ENCODE measurements at regions of chr22 and their contacts with region 1.

Region 1: GRCh38 chr22:30005213-30005857 is 74.9 kb upstream of the HORMAD2 start:
- DNase-seq: peak; percentile 59 to 77
- ATAC-seq: peak; percentile 67 to 81 (median 78)
- H3K4me3 ChIP-seq: no peak overlapping the region
- H3K4me3 Mint-ChIP-seq: no peak overlapping the region
- H3K27ac ChIP-seq: no peak overlapping the region
- H3K27ac Mint-ChIP-seq: no peak overlapping the region
- H3K4me1 ChIP-seq: peaks cover 3% of the 10 kb centered on the region
- H3K4me1 Mint-ChIP-seq: peaks cover 4 to 10% of the 10 kb centered on the region in 2 donors
- H3K27me3 ChIP-seq: no peaks in the 10 kb centered on the region
- H3K27me3 Mint-ChIP-seq: no peaks in the 10 kb centered on the region
- CTCF ChIP-seq: peak; percentile 92

Region 2: DNA sequence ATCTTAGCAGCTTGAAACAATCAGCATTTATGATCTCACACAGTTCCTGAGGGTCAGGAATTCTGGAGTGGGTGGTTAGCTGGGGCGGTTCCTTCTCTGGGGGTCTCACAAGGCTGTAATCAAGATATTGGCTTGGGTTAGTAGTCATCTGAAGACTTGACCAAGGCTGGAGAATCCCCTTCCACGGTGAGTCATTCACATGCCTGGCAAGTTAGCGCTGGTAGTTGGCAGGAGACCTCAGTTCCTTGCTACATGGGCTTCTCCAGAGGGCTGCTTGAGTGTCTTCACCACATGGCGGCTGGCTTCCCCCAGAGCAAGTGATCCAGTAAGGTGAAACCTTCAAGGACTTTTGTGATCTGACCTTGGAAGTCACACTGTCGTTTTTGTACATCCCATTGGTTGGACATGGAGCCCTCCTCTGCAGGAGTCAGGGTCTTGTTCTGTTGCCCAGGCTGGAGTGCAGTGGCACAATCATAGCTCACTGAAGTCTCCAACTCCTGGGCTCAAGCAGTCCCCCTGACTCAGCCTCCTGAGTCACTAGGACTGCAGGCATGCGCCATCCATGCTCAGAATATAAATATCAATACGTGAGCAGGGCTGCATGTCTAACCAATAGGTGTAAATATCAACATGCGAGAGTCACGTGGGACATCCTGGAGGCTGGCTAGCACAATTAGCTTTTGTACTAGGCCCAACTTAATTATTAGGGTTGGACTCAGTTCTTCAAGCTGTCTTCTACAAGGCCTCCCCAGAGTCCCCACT is 417.2 kb before region 1 on chr22:
- intact Hi-C with region 1: loop called (anchors 2 kb)
- DNase-seq: no peak
- ATAC-seq: no peak
- H3K4me3 ChIP-seq: no peak overlapping the region
- H3K4me3 Mint-ChIP-seq: no peak overlapping the region
- H3K27ac ChIP-seq: no peak overlapping the region
- H3K27ac Mint-ChIP-seq: peak overlapping the region; percentile 36 to 70
- H3K4me1 ChIP-seq: peaks cover 6% of the 10 kb centered on the region
- H3K4me1 Mint-ChIP-seq: peaks cover 6 to 7% of the 10 kb centered on the region in 2 donors
- H3K27me3 ChIP-seq: no peaks in the 10 kb centered on the region
- H3K27me3 Mint-ChIP-seq: no peaks in the 10 kb centered on the region
- CTCF ChIP-seq: no peak

Region 3: DNA sequence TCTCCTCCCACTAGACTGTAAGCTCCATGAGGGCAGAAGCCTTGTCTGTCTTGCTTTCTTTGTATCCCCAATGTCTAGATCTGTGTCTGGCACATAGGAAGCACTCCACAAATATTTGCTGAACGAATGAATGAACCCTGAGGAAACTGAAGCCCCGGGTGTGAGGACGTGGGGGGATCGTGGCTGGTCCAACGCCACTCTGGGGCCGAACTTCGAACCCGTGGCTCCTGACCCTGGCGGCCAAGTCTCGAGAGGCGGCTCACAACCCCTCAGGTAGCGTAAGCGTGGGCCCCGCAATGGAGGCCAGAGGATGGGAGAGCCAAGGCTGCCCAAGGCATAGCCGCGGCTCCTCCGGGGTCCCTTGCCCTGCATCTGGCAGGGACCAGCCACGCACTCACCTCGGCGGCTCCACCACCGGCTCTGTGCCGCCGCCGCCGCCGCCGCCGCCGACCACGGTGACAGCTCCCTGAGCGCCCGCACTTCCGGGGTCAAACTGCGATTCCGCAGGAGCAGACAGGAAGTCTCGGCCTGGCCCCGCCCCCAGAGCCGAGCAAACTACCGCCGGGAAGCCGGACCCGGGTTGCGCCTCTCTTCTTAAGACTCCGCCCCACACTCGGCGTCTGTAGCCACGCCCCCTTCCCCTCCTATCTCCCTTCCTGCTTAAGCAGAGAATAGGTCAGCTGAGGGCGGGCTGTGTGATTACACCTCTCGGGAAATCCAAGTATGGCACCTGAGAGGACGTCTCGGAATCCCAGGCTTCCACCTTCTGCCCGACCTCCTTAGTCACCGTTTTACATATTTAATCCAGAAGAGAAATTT is 167.3 kb before region 1 on chr22 and contains the start of gene ASCC2:
- intact Hi-C with region 1: loop called (anchors 1 kb)
- DNase-seq: peak; percentile 96 to 99
- ATAC-seq: peak; percentile 96 to 99 (median 97)
- H3K4me3 ChIP-seq: peak within 1 kb of the TSS; percentile 65
- H3K4me3 Mint-ChIP-seq: peak within 1 kb of the TSS; percentile 96
- H3K27ac ChIP-seq: peak within 1 kb of the TSS; percentile 84
- H3K27ac Mint-ChIP-seq: peak within 1 kb of the TSS; percentile 98
- H3K4me1 ChIP-seq: peaks cover 14% of the 10 kb centered on the region
- H3K4me1 Mint-ChIP-seq: peaks cover 35 to 40% of the 10 kb centered on the region in 2 donors
- H3K27me3 ChIP-seq: no peaks in the 10 kb centered on the region
- H3K27me3 Mint-ChIP-seq: no peaks in the 10 kb centered on the region
- CTCF ChIP-seq: no peak
- total RNA-seq, gene ASCC2: 102 to 130 (median 128) TPM

Region 4: DNA sequence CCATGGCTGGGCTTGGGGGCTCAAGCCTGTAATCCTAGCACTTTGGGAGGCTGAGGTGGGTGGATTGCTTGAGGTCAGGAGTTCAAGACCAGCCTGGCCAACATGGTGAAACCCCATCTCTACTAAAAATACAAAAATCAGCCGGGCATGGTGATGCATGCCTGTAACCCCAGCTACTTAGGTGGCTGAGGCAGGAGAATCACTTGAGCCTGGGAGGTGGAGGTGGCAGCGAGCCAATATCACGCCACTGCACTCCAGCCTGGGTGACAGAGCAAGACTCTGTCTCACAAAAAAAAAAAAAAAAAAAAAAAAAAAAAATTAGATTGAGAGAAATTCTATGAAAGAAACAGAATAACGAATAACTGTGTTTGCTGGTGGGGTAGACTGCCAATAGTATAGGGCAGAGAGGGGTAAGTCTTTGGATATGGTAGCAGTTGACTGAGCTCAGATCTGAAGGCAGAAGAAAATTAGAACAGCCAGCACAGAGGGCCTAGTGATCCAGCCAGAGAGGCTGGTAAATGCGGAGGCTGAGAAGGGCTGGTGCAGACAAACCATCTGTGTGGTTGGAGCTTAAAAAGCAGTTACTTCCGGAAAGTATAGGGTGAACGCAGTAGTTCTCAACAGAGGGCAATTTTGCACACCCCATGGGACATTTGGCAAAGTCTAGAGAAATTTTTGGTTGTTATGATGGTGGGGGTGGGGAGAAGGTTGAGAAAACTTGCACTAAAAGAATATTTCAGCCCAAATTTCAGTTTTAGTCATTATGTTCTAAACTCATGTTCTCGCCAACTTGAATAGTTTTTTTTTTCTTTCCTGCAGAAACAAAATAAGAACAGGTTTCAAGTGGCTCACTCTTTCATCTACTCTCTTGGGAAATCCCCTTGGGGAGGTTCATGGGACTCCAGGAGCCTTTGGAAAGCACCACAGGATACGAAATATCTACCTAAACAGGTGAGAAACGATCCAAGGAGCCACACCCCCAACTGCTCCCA is 73.3 kb after region 1 on chr22:
- intact Hi-C with region 1: no loop called
- DNase-seq: peak in 1 of 2 donors; percentile 55
- ATAC-seq: no peak
- H3K4me3 ChIP-seq: no peak overlapping the region
- H3K4me3 Mint-ChIP-seq: peak overlapping the region; percentile 43
- H3K27ac ChIP-seq: no peak overlapping the region
- H3K27ac Mint-ChIP-seq: peak overlapping the region in 1 of 2 donors; percentile 30
- H3K4me1 ChIP-seq: peaks cover 6% of the 10 kb centered on the region
- H3K4me1 Mint-ChIP-seq: peaks cover 0 to 8% of the 10 kb centered on the region in 2 donors
- H3K27me3 ChIP-seq: no peaks in the 10 kb centered on the region
- H3K27me3 Mint-ChIP-seq: peaks cover 29 to 49% of the 10 kb centered on the region in 2 donors
- CTCF ChIP-seq: no peak